ENCODE measurements at regions of chr1 and their contacts with region 1.

Region 1: DNA sequence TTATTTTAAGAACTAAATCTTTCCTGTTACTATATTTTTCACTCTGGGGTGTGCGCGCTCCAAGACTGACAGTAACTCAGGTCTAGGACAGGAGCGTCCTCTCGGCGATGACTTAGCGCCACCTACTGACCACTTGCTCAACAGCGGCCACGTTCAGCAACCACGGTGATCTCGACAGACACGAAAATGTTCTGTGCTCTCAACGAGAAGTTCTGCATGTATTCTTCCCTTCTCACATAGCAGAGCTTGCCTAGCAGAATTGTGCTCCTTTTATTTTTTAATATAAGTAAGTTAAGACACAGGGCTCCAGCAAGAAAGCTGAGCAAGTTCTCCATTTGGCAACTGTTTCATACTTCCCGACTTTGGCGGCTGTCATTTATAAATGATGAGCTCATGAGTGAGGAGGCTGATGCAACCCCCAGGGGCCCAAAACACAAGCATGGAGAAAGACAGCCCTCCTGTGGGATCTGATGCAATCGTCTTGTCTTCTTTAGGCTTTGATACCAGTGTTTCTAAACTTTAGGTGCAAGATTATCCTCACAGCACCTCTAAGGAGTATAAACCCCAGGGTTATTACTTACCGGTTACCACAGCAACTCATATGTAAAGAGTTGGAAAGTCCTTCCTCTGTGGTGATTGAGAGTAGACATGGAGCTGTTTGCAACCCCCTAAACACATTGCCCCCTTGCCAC is 92.6 kb downstream of the HHIPL2 start:
- DNase-seq: peak; percentile 92
- H3K4me3 Mint-ChIP-seq: no peak overlapping the region
- H3K27ac Mint-ChIP-seq: no peak overlapping the region
- H3K4me1 Mint-ChIP-seq: peaks cover 18% of the 10 kb centered on the region
- H3K27me3 Mint-ChIP-seq: no peaks in the 10 kb centered on the region

Region 2: GRCh38 chr1:220810179-220810653 is 1645.1 kb before region 1 on chr1:
- CTCF ChIA-PET with region 1: no interaction called
- intact Hi-C with region 1: loop called (anchors 1 kb)
- DNase-seq: peak; percentile 81
- H3K4me3 Mint-ChIP-seq: peak overlapping the region; percentile 22
- H3K27ac Mint-ChIP-seq: no peak overlapping the region
- H3K4me1 Mint-ChIP-seq: peaks cover 3% of the 10 kb centered on the region
- H3K27me3 Mint-ChIP-seq: peaks cover 21% of the 10 kb centered on the region

Region 3: GRCh38 chr1:221543529-221544120 is 911.7 kb before region 1 on chr1:
- CTCF ChIA-PET with region 1: no interaction called
- intact Hi-C with region 1: loop called (anchors 1 kb)
- DNase-seq: no peak
- H3K4me3 Mint-ChIP-seq: no peak overlapping the region
- H3K27ac Mint-ChIP-seq: no peak overlapping the region
- H3K4me1 Mint-ChIP-seq: no peaks in the 10 kb centered on the region
- H3K27me3 Mint-ChIP-seq: peaks cover 8% of the 10 kb centered on the region

Region 4: DNA sequence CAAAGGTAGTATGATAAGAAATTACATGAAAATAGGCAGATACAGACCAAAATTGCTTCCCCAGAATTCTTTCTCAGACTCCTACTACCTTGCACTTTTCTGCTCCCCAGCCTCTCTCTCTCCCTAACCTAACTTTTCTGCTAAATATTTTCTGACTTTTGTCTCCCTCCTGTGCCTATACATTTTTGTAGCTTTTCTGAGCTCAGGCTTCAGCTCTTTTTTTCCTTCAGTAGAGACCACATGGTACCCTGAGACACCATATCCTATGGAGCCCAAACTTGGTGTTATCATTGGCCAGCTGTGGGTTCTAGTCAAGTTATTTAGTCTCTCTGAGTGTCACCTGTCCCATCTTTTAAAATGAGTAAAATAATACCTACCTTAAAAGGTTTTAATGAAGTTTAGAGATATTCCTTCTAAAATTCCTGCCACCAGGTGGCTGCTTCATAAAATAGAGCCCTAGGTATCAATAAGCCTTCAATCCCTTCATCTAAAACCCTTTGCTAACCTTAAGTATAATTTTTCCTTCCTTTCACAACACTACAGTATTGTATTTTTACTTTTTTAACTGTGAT is 475.8 kb before region 1 on chr1:
- CTCF ChIA-PET with region 1: interaction called, 3 read pairs
- intact Hi-C with region 1: loop called (anchors 1 kb)
- DNase-seq: no peak
- H3K4me3 Mint-ChIP-seq: no peak overlapping the region
- H3K27ac Mint-ChIP-seq: no peak overlapping the region
- H3K4me1 Mint-ChIP-seq: no peaks in the 10 kb centered on the region
- H3K27me3 Mint-ChIP-seq: peaks cover 6% of the 10 kb centered on the region

Region 5: DNA sequence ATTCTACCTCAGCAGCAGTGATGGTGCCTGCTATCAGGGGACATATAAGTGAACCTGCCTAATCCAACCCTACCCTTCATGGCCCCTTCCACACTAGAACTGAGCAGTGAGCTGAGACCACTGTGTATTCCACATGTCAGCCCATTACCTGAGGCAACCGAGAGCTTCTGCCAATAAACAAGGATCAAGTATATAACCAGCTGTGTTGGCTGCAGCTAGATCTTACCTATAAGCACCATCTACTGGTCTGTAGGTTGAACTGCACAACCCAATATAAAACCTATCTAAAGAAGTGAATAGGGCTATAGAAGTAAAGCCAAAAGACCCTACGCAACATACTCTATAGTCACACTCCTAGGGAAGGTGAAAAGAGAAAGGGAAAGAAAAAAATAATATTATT is 284.3 kb before region 1 on chr1:
- CTCF ChIA-PET with region 1: interaction called, 3 read pairs
- intact Hi-C with region 1: loop called (anchors 1 kb)
- DNase-seq: no peak
- H3K4me3 Mint-ChIP-seq: no peak overlapping the region
- H3K27ac Mint-ChIP-seq: no peak overlapping the region
- H3K4me1 Mint-ChIP-seq: no peaks in the 10 kb centered on the region
- H3K27me3 Mint-ChIP-seq: no peaks in the 10 kb centered on the region

Region 6: GRCh38 chr1:222275729-222276465 is 179.4 kb before region 1 on chr1:
- CTCF ChIA-PET with region 1: no interaction called
- intact Hi-C with region 1: no loop called
- DNase-seq: no peak
- H3K4me3 Mint-ChIP-seq: no peak overlapping the region
- H3K27ac Mint-ChIP-seq: no peak overlapping the region
- H3K4me1 Mint-ChIP-seq: no peaks in the 10 kb centered on the region
- H3K27me3 Mint-ChIP-seq: no peaks in the 10 kb centered on the region

Region 7: DNA sequence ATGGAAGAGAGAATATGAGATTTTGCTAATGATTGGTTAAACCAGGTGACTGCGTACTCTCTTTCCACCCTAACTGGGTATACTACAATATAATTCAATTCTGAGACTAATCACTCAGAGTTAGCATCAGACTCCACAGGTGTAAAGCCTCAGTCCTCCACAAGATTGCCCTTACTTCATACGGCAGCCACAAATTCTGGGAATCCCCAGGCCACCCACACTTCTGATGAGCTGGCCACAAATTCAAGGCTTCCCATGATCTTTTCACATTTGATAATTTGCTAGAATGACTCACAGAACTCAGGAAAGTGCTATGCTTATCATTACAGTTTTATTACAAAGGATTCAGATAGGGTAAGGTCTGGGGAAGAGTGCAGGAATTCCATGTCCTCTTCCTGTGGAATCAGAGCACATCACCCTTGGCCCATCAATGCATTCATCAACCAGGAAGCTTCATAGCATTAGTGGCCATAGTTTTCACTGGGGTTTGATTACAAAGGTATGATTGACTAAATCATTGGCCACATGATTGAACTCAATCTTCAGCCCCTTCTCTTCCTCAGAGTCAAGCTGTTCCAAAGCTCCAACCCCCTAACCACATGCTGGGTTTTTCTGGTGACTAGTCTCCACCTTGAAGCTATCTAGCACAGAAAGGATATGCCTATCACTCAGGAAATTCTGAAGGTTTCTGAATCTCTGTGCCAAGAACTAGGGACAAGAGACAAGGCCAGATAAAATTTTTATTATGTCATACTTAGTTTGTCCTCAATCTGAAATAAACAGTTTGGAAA is 39.1 kb before region 1 on chr1:
- CTCF ChIA-PET with region 1: interaction called, 7 read pairs
- intact Hi-C with region 1: loop called (anchors 1 kb)
- DNase-seq: peak; percentile 69
- H3K4me3 Mint-ChIP-seq: no peak overlapping the region
- H3K27ac Mint-ChIP-seq: no peak overlapping the region
- H3K4me1 Mint-ChIP-seq: peaks cover 59% of the 10 kb centered on the region
- H3K27me3 Mint-ChIP-seq: no peaks in the 10 kb centered on the region

Region 8: GRCh38 chr1:222465211-222466041 is 10.1 kb after region 1 on chr1:
- CTCF ChIA-PET with region 1: interaction called, 25 read pairs
- intact Hi-C with region 1: no loop called
- DNase-seq: peak; percentile 78
- H3K4me3 Mint-ChIP-seq: peak overlapping the region; percentile 67
- H3K27ac Mint-ChIP-seq: peak overlapping the region; percentile 85
- H3K4me1 Mint-ChIP-seq: peaks cover 10% of the 10 kb centered on the region
- H3K27me3 Mint-ChIP-seq: no peaks in the 10 kb centered on the region

Measured in activated naive CD4-positive, alpha-beta T cell treated with anti-CD3 and anti-CD28 coated beads for 36 hours (primary cell).